ENCODE measurements at regions of chr19 and their contacts with region 1.

Region 1: GRCh38 chr19:30784850-30785457 is 412.8 kb downstream of the ZNF536 start:
- DNase-seq: peak in 2 of 4 donors; percentile 43 to 86
- ATAC-seq: peak; percentile 81
- H3K4me3 ChIP-seq: no peak overlapping the region
- H3K27ac ChIP-seq: no peak overlapping the region
- H3K4me1 ChIP-seq: no peaks in the 10 kb centered on the region
- H3K27me3 ChIP-seq: peaks cover 0 to 7% of the 10 kb centered on the region in 2 donors
- CTCF ChIP-seq: peak; percentile 61 to 66

Region 2: DNA sequence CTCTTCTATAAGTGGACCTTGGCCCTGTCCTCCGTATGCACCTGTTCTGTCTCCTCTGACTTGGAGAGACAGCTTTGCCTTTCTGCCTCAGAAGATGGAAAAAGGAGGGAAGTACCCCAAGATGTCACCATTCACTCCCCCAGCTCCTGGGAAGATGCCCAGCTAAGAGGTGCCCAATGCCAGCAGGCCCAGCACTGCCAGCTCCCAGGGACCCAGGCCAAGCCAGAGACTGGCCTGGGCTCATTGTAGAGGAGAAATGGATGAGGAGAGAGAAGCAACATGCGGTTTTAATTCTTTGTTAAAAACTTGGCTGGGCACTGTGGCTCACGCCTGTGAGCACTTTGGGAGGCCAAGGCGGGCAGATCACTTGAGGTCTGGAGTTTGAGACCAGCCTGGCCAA is 1448.9 kb after region 1 on chr19:
- intact Hi-C with region 1: loop called in 1 of 2 experiments (anchors 5 kb)
- DNase-seq: no peak
- ATAC-seq: no peak
- H3K4me3 ChIP-seq: no peak overlapping the region
- H3K27ac ChIP-seq: no peak overlapping the region
- H3K4me1 ChIP-seq: no peaks in the 10 kb centered on the region
- H3K27me3 ChIP-seq: peaks cover 0 to 42% of the 10 kb centered on the region in 2 donors
- CTCF ChIP-seq: no peak

Measured in left lung (tissue), 14 donors.